Left ventricle myocardium superior (tissue), 1 donor: ENCODE measurements at regions of chr21 and their contacts with region 1.

Region 1: DNA sequence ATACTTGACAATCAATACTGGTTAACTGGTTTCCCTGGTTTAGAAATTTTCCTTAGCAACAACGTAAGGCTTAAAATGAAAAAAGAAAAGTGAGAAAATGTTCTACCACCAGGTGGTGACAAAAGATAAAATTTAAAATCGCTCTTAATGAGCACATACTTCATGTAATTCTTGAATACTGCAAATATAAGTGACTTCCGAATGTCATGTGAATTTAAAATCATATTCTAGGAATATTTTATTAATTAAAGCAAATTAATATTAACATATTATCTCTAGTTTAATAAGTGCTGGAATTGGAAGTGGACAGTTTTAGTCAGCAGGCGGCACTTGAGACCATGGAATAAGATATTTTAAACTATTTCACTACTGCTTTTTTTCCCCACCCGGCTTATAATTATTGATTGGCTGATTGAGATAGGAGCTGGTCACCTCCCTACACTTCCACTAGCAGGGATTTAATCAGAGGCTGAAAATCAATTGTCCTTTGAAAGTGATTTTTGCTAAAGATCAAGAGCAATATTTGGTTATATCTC is 5.0 kb upstream of the ADAMTS1 start:
- DNase-seq: no peak
- ATAC-seq: no peak

Region 2: GRCh38 chr21:27564684-27565301 is 714.6 kb after region 1 on chr21:
- intact Hi-C with region 1: loop called (anchors 10 kb)
- DNase-seq: peak; percentile 33
- ATAC-seq: peak; percentile 75

Region 3: GRCh38 chr21:27700974-27701614 is 850.9 kb after region 1 on chr21:
- intact Hi-C with region 1: loop called (anchors 2 kb)
- DNase-seq: peak; percentile 87
- ATAC-seq: peak; percentile 92